CD8-positive, alpha-beta T cell (primary cell): ENCODE measurements at regions of chr3 and their contacts with region 1.

Region 1: GRCh38 chr3:41881233-41881821 is 80.6 kb downstream of the ULK4 start:
- DNase-seq: peak in 3 of 9 experiments; percentile 13 to 62 (median 52)
- ATAC-seq: no peak
- H3K4me3 ChIP-seq: no peak overlapping the region
- H3K4me3 Mint-ChIP-seq: no peak overlapping the region
- H3K27ac ChIP-seq: no peak overlapping the region
- H3K27ac Mint-ChIP-seq: no peak overlapping the region
- H3K4me1 ChIP-seq: no peaks in the 10 kb centered on the region
- H3K4me1 Mint-ChIP-seq: no peaks in the 10 kb centered on the region
- H3K27me3 ChIP-seq: no peaks in the 10 kb centered on the region
- H3K27me3 Mint-ChIP-seq: no peaks in the 10 kb centered on the region
- CTCF ChIP-seq: peak; percentile 82

Region 2: GRCh38 chr3:40191850-40192448 is 1689.4 kb before region 1 on chr3:
- CTCF ChIA-PET with region 1: interaction called, 4 read pairs
- POLR2A ChIA-PET with region 1: no interaction called
- intact Hi-C with region 1: loop called in 1 of 2 experiments (anchors 5 kb)
- DNase-seq: peak; percentile 8 to 70 (median 59)
- ATAC-seq: peak; percentile 78
- H3K4me3 ChIP-seq: no peak overlapping the region
- H3K4me3 Mint-ChIP-seq: no peak overlapping the region
- H3K27ac ChIP-seq: no peak overlapping the region
- H3K27ac Mint-ChIP-seq: no peak overlapping the region
- H3K4me1 ChIP-seq: no peaks in the 10 kb centered on the region
- H3K4me1 Mint-ChIP-seq: no peaks in the 10 kb centered on the region
- H3K27me3 ChIP-seq: no peaks in the 10 kb centered on the region
- H3K27me3 Mint-ChIP-seq: no peaks in the 10 kb centered on the region
- CTCF ChIP-seq: peak; percentile 83

Region 3: GRCh38 chr3:40329071-40329470 is 1552.3 kb before region 1 on chr3:
- CTCF ChIA-PET with region 1: interaction called, 9 read pairs
- POLR2A ChIA-PET with region 1: no interaction called
- intact Hi-C with region 1: loop called (anchors 1 kb)
- DNase-seq: no peak
- ATAC-seq: no peak
- H3K4me3 ChIP-seq: no peak overlapping the region
- H3K4me3 Mint-ChIP-seq: no peak overlapping the region
- H3K27ac ChIP-seq: no peak overlapping the region
- H3K27ac Mint-ChIP-seq: no peak overlapping the region
- H3K4me1 ChIP-seq: no peaks in the 10 kb centered on the region
- H3K4me1 Mint-ChIP-seq: peaks cover 3% of the 10 kb centered on the region
- H3K27me3 ChIP-seq: no peaks in the 10 kb centered on the region
- H3K27me3 Mint-ChIP-seq: peaks cover 3% of the 10 kb centered on the region
- CTCF ChIP-seq: no peak

Region 4: GRCh38 chr3:43120937-43121336 is 1239.6 kb after region 1 on chr3:
- CTCF ChIA-PET with region 1: no interaction called
- POLR2A ChIA-PET with region 1: no interaction called
- intact Hi-C with region 1: no loop called
- DNase-seq: no peak
- ATAC-seq: no peak
- H3K4me3 ChIP-seq: no peak overlapping the region
- H3K4me3 Mint-ChIP-seq: no peak overlapping the region
- H3K27ac ChIP-seq: no peak overlapping the region
- H3K27ac Mint-ChIP-seq: no peak overlapping the region
- H3K4me1 ChIP-seq: no peaks in the 10 kb centered on the region
- H3K4me1 Mint-ChIP-seq: no peaks in the 10 kb centered on the region
- H3K27me3 ChIP-seq: no peaks in the 10 kb centered on the region
- H3K27me3 Mint-ChIP-seq: peaks cover 4% of the 10 kb centered on the region
- CTCF ChIP-seq: no peak